ENCODE measurements at regions of chr6 and their contacts with region 1.

Region 1: GRCh38 chr6:87154993-87155841 is at the start of gene ZNF292:
- DNase-seq: peak; percentile 99
- H3K4me3 ChIP-seq: peak within 1 kb of the TSS; percentile 92
- H3K27ac ChIP-seq: peak within 1 kb of the TSS; percentile 86
- H3K4me1 ChIP-seq: peaks cover 31% of the 10 kb centered on the region
- H3K27me3 ChIP-seq: no peaks in the 10 kb centered on the region
- CTCF ChIP-seq: no peak
- total RNA-seq, gene ZNF292: 42.6 and 45.0 TPM in 2 replicates

Region 2: GRCh38 chr6:87230801-87231200 is 75.6 kb after region 1 on chr6:
- CTCF ChIA-PET with region 1: no interaction called
- POLR2A ChIA-PET with region 1: no interaction called
- intact Hi-C with region 1: loop called (anchors 5 kb)
- DNase-seq: no peak
- H3K4me3 ChIP-seq: no peak overlapping the region
- H3K27ac ChIP-seq: no peak overlapping the region
- H3K4me1 ChIP-seq: no peaks in the 10 kb centered on the region
- H3K27me3 ChIP-seq: no peaks in the 10 kb centered on the region
- CTCF ChIP-seq: no peak

Measured in A673 (cell line).